GM10248 (cell line): ENCODE measurements at regions of chr7 and their contacts with region 1.

Region 1: DNA sequence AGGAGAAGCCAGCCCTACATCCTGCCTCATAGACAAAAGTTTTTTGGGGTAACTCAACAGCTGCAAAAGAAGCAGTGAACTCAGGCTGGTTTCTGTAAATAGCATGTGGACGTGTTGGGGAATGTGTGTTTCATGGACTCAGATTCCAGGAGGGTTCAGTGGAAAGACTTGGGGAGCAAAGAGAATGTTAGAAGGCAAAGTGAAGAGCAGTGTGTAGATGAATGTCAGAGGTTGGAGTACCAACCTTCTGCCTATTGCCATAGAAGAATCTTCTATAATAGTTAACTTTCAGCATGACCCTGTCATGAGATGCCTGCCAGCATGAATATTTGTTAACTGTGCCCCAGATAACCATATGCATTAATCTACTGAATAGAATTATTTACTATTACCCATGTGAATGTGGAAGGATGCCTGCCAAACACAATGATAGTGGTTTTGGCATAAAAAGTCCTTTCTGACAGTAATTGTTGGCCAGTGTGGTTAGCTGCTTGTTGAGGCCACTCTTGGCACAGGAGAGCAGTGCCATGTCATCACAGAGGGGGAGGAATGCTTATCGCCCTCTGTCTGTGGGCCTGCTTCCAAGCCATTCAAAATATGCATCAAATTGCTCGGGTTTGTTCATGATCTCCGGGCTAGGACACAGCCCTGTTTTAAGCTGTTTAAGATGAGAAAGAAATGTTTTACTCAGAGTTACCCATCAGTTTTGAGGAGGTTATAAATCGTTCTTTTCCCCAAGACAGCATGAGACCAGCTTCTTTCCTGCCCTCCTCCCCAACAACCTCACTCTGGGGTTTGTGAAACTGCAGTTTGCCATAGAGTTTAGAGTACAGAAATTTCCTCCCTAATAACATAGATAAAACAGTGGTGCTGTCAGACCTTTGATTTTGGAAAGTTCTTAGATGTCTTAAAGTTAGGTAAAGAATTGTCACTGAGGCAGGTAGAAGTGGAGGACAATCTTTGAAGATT is 165.3 kb downstream of the WNT2 start:
- DNase-seq: no peak
- CTCF ChIP-seq: no peak

Region 2: GRCh38 chr7:116953727-116954442 is 203.6 kb before region 1 on chr7:
- CTCF ChIA-PET with region 1: no interaction called
- POLR2A ChIA-PET with region 1: no interaction called
- DNase-seq: peak; percentile 77
- CTCF ChIP-seq: no peak

Region 3: DNA sequence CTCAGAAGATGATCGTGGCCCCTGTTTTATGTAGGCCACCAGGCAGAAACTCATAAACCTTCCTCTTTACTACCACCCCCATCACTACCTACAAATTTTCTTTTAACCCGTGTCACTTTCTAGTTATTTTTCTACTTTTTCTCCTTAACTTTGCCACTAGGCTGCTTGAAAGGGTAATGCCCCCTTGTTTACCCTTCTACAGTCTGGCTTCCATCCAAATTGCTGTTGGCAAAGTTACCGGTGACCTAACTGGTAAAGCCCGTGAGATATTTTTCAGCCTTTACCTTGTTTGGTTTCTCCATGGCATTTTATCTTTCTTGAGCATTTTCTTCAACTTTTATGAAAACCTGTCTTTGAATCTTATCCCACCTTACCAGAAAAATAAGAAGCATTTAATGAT is 12.4 kb after region 1 on chr7:
- CTCF ChIA-PET with region 1: interaction called, 14 read pairs
- POLR2A ChIA-PET with region 1: no interaction called
- DNase-seq: no peak
- CTCF ChIP-seq: no peak

Region 4: GRCh38 chr7:117505245-117505644 is 347.7 kb after region 1 on chr7:
- CTCF ChIA-PET with region 1: no interaction called
- POLR2A ChIA-PET with region 1: no interaction called
- DNase-seq: no peak
- CTCF ChIP-seq: no peak